ENCODE measurements at regions of chr4 and their contacts with region 1.

Region 1: DNA sequence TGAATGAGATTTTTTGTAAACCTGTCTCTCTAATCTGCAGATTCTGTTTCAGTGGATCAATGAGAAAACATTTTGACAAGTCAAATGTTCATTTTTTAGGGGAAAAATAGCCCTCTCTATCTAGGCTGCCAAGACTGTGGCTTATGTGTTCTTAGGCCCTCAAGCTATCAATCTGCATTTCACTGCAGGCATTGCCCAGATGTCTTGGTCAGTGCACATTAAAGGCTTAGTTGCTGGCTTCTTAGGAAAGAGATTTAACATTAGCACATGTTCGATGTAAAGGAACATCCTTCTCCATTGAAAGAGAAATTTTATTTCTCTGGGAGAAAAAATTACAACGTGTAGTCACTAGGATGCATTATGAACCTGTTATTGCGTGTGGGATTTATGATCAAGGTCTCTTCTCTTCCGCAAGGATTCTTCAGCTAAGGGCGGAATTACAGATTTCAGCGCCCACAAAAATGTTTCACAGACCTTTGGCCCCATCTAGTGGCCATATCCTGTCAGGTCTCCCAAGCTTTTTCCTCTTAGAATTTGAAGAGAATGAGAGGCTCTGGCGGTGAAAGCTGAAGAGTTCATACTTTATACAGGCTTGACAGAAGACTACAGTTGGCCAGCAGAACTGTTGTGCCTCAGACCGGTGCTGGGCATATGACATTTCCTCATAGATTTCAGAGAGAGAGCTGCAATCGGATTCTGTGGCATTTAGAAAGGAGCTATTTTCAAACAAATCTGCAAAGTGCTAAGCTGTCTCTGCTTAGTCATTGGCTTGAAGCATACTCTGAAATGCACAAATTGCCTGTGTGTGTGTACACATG is 144.6 kb upstream of the NOCT start:
- DNase-seq: peak; percentile 81
- H3K4me3 Mint-ChIP-seq: no peak overlapping the region
- H3K27ac Mint-ChIP-seq: no peak overlapping the region
- H3K4me1 Mint-ChIP-seq: peaks cover 11% of the 10 kb centered on the region
- H3K27me3 Mint-ChIP-seq: no peaks in the 10 kb centered on the region
- CTCF ChIP-seq: peak; percentile 78

Region 2: GRCh38 chr4:137819964-137820383 is 1051.0 kb before region 1 on chr4:
- CTCF ChIA-PET with region 1: interaction called, 4 read pairs
- POLR2A ChIA-PET with region 1: no interaction called
- intact Hi-C with region 1: loop called (anchors 5 kb)
- DNase-seq: peak; percentile 80
- H3K4me3 Mint-ChIP-seq: no peak overlapping the region
- H3K27ac Mint-ChIP-seq: no peak overlapping the region
- H3K4me1 Mint-ChIP-seq: peaks cover 12% of the 10 kb centered on the region
- H3K27me3 Mint-ChIP-seq: no peaks in the 10 kb centered on the region
- CTCF ChIP-seq: peak; percentile 78

Region 3: GRCh38 chr4:138897811-138898226 is 26.9 kb after region 1 on chr4:
- CTCF ChIA-PET with region 1: interaction called, 15 read pairs
- POLR2A ChIA-PET with region 1: interaction called, 5 read pairs
- intact Hi-C with region 1: no loop called
- DNase-seq: peak; percentile 50
- H3K4me3 Mint-ChIP-seq: peak overlapping the region; percentile 41
- H3K27ac Mint-ChIP-seq: peak overlapping the region; percentile 29
- H3K4me1 Mint-ChIP-seq: peaks cover 20% of the 10 kb centered on the region
- H3K27me3 Mint-ChIP-seq: no peaks in the 10 kb centered on the region
- CTCF ChIP-seq: no peak

Region 4: DNA sequence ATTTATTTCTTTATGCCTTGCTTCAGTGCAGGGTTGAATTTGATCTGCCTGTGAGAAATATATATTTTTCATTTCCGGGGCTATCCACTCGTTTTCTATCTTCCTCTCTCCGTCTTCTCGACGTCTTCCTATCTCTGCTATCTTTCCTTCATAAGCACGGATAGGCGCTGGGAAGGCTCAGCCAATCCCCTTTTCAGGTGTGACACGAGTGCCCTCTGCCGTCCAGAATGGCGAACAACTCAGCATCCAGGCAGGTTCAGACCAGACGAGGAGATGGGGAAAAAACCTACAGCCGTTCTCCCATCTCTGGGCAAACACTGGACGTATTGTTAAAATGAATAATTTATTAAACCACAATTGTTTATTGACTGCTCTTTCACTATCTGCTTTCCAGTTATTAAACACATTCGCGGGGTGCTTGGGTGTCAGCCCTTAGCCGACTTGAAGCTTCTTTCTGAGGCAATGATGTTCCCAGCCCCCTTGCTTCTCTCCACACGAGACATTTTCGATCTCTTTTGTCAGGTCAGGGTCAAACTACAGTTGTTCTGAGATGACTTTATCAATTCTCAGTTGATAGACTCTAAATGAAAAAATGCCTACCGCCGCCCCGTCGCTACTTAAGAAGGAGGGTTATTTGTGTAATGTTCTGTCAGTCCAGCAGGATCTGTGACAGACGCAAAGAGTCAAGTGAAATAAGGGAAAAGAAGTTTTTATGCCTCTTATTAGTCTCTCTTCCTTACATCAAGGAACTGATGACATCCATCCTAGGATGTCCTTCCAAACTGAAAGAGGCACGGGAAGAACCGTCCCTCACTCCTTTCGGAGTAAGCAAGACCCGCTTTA is 48.4 kb after region 1 on chr4:
- CTCF ChIA-PET with region 1: interaction called, 19 read pairs
- POLR2A ChIA-PET with region 1: no interaction called
- intact Hi-C with region 1: loop called (anchors 1 kb)
- DNase-seq: peak; percentile 85
- H3K4me3 Mint-ChIP-seq: no peak overlapping the region
- H3K27ac Mint-ChIP-seq: no peak overlapping the region
- H3K4me1 Mint-ChIP-seq: peaks cover 7% of the 10 kb centered on the region
- H3K27me3 Mint-ChIP-seq: no peaks in the 10 kb centered on the region
- CTCF ChIP-seq: peak; percentile 71

Region 5: GRCh38 chr4:139129206-139129605 is 258.3 kb after region 1 on chr4:
- CTCF ChIA-PET with region 1: no interaction called
- POLR2A ChIA-PET with region 1: no interaction called
- intact Hi-C with region 1: no loop called
- DNase-seq: no peak
- H3K4me3 Mint-ChIP-seq: no peak overlapping the region
- H3K27ac Mint-ChIP-seq: no peak overlapping the region
- H3K4me1 Mint-ChIP-seq: no peaks in the 10 kb centered on the region
- H3K27me3 Mint-ChIP-seq: no peaks in the 10 kb centered on the region
- CTCF ChIP-seq: no peak